ENCODE measurements at regions of chr15 and their contacts with region 1.

Region 1: DNA sequence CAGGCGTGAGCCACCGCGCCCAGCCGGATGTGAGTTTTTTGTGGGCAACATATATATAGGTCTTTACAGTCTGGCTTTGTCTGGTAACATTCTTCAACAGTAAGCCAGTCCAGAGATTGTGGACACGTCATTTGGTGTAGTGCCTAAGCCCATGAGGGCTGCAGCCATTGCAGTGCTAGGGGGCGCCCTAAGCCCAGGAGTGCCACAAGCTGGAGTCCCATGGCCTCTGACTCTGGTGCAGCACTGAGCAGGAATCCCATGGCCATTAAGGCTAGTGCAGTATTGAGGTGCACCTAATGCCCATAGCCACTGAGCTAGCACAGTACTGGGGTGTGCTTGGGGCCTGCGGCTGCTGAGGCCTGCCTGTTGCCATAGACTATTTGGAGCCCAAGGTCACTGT is 136.4 kb upstream of the NDN start:
- DNase-seq: no peak
- ATAC-seq: no peak
- H3K4me3 ChIP-seq: no peak overlapping the region
- H3K27ac ChIP-seq: no peak overlapping the region
- H3K4me1 ChIP-seq: no peaks in the 10 kb centered on the region
- H3K27me3 ChIP-seq: no peaks in the 10 kb centered on the region
- CTCF ChIP-seq: no peak

Region 2: DNA sequence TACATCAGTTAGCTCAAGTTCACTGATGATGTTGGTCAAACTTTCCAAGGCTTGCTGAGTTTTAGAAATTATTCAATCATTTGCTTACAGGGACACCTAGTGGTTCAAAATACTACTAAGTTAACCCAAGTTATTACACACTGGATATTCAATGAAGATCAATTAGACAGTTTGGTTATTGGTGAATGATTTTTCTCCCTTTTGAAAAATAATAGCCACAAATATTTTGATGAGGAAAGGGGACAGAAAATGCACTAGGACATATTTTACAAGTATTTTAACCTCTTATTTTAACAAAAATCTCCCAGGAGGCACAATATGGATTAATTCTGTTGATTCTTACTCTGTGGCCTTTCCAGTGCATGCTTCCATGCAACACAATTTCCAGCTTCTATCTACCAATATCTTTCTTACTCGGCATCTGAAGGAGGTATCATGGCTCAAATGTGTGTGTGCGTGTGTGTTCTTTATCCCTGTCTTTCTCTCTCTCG is 356.4 kb before region 1 on chr15:
- intact Hi-C with region 1: no loop called
- DNase-seq: no peak
- ATAC-seq: peak in 4 of 8 donors; percentile 35 to 54 (median 46)
- H3K4me3 ChIP-seq: no peak overlapping the region
- H3K27ac ChIP-seq: no peak overlapping the region
- H3K4me1 ChIP-seq: no peaks in the 10 kb centered on the region
- H3K27me3 ChIP-seq: peaks cover 0 to 3% (median 0%) of the 10 kb centered on the region in 7 donors
- CTCF ChIP-seq: peak in 7 of 9 donors; percentile 41 to 60 (median 53)

Region 3: GRCh38 chr15:23877502-23878412 is 54.2 kb after region 1 on chr15:
- intact Hi-C with region 1: loop called in 1 of 10 experiments (anchors 10 kb)
- DNase-seq: peak; percentile 22 to 31
- ATAC-seq: peak in 6 of 8 donors; percentile 53 to 81 (median 62)
- H3K4me3 ChIP-seq: no peak overlapping the region
- H3K27ac ChIP-seq: no peak overlapping the region
- H3K4me1 ChIP-seq: no peaks in the 10 kb centered on the region
- H3K27me3 ChIP-seq: peaks cover 0 to 10% (median 0%) of the 10 kb centered on the region in 7 donors
- CTCF ChIP-seq: peak; percentile 41 to 65 (median 58)

Region 4: GRCh38 chr15:23897531-23897930 is 74.0 kb after region 1 on chr15:
- intact Hi-C with region 1: no loop called
- DNase-seq: peak in 1 of 2 donors; percentile 12
- ATAC-seq: peak in 1 of 8 donors; percentile 63
- H3K4me3 ChIP-seq: peak overlapping the region in 5 of 10 donors; percentile 7 to 33 (median 26)
- H3K27ac ChIP-seq: no peak overlapping the region
- H3K4me1 ChIP-seq: no peaks in the 10 kb centered on the region
- H3K27me3 ChIP-seq: no peaks in the 10 kb centered on the region
- CTCF ChIP-seq: no peak

Measured in heart right ventricle (tissue), 16 donors.